ENCODE measurements at regions of chr4 and their contacts with region 1.

Region 1: DNA sequence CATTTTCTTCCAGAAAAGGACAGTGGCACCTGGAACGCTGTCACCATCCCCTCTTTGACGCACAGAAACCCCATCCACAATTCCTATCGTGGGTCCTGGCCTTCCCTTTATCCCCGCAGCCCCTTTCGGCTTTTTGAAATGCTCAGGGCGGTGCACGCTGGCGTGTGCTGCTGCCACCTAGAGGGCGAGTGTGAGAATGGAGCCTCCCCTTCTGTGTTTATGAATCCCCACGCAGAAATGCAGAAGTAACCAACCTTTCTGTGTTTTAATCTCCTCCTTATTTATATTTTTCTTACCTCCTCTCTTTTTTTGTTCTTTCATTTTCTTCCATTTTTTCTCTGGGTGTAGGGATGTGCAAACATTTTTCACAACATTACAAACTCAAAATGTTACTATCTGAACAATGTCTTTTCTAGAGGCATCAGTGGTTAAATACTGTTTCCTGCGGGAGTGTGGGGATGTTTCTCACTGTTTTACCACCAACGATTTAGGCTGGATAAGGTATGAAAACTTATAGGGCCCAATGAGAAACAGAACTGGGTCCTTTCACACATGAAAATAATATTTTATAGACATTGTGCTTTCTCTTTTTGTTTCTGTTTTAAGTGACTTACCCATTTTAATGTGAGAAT is 50.0 kb downstream of the TMA16 start:
- DNase-seq: peak; percentile 63
- H3K4me3 Mint-ChIP-seq: no peak overlapping the region
- H3K27ac Mint-ChIP-seq: no peak overlapping the region
- H3K4me1 Mint-ChIP-seq: peaks cover 5% of the 10 kb centered on the region
- H3K27me3 Mint-ChIP-seq: no peaks in the 10 kb centered on the region
- CTCF ChIP-seq: peak; percentile 80

Region 2: GRCh38 chr4:162497564-162498167 is 1046.9 kb before region 1 on chr4:
- CTCF ChIA-PET with region 1: interaction called, 54 read pairs
- POLR2A ChIA-PET with region 1: interaction called, 4 read pairs
- intact Hi-C with region 1: loop called (anchors 1 kb)
- DNase-seq: peak; percentile 66
- H3K4me3 Mint-ChIP-seq: no peak overlapping the region
- H3K27ac Mint-ChIP-seq: no peak overlapping the region
- H3K4me1 Mint-ChIP-seq: peaks cover 6% of the 10 kb centered on the region
- H3K27me3 Mint-ChIP-seq: no peaks in the 10 kb centered on the region
- CTCF ChIP-seq: peak; percentile 90

Region 3: GRCh38 chr4:163107754-163108153 is 436.8 kb before region 1 on chr4:
- CTCF ChIA-PET with region 1: interaction called, 10 read pairs
- POLR2A ChIA-PET with region 1: no interaction called
- intact Hi-C with region 1: loop called (anchors 10 kb)
- DNase-seq: peak; percentile 36
- H3K4me3 Mint-ChIP-seq: no peak overlapping the region
- H3K27ac Mint-ChIP-seq: no peak overlapping the region
- H3K4me1 Mint-ChIP-seq: no peaks in the 10 kb centered on the region
- H3K27me3 Mint-ChIP-seq: no peaks in the 10 kb centered on the region
- CTCF ChIP-seq: peak; percentile 18

Region 4: DNA sequence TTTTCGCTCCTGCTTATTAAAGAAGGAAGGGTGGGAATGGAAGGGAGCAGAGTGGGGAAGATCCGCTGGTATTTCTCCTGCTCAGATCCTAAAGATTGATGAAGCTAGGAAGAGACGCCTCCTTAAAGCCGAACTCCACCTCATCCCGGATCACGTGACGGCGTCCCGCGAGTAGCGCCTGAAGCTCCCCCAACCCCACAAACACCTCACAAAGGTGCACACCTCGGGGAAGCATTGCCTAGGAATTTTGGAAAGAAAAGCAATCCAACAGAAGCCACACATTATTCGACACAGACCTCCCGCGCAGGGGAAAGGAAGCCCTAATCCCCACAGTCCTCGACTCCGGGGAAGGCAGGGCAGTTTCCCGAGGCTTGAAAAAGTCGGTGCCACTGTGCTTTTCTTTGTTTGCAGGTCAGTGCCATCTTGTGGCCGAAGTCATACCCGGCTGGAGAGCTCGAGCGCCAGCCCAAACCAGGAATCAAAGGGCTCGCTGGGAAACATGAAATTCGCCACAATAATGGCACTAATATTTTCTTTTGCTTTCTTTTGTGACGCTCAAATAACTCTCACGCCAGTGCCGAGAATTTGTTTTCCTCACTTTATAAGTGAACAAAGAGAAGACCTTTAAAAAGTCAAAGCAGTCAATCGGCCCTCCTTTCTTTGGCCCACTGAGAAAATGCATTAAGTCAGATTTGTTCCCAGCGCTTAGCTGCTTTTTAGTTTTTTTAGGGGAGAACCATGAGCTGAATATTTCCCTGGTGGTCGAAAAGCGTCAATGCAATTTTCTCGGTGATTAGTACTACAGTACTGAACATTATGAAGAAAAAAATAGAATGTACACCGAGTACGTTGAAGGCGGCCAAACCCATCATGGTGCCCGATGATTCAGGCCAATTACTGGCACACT is 211.8 kb before region 1 on chr4 and contains the start of gene NPY1R:
- CTCF ChIA-PET with region 1: interaction called, 13 read pairs
- POLR2A ChIA-PET with region 1: interaction called, 3 read pairs
- intact Hi-C with region 1: loop called (anchors 2 kb)
- DNase-seq: peak; percentile 86
- H3K4me3 Mint-ChIP-seq: peak within 1 kb of the TSS; percentile 97
- H3K27ac Mint-ChIP-seq: peak within 1 kb of the TSS; percentile 73
- H3K4me1 Mint-ChIP-seq: peaks cover 5% of the 10 kb centered on the region
- H3K27me3 Mint-ChIP-seq: no peaks in the 10 kb centered on the region
- CTCF ChIP-seq: peak; percentile 68
- total RNA-seq, gene NPY1R: 0.63 and 2.8 TPM in 2 replicates

Region 5: DNA sequence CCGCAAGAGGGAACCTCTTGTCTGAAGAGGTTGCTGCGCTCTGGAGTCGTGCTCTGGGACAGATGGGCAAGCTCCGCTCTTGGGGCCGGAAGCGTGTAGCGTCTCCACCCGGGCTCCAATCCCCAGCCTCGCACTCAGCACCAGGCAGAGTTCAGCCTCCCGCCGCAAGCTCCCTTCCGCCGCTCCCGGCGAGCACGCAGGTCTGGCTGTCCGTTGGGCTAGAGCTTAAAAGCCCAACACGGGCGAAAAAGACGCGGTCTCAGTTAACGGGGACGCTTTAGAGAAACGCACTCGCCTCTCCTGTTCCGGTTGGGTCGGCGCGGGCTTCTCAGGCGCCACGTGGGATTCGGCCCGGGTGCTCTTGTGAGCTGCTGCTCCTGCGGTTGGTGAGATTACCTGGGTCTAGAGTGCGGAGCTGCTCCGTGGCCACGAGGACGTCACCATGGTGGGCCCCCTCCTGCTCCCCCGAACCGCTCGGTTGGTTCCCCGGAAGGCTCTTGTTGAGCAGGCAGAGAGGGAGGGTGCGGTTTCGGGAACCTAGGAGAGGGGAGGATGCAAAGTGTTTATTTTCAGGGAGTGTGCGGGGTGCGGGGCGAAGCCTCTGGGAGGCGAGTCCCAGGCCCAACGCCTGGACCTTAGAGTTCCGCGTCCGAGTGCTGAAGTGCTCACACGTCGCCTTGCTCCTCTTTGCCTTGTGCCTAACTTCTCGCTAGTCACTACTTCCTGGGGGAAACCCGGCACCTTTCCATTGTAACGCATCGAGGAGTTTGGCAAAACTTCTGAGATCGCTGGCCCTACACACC is 50.0 kb before region 1 on chr4 and contains the start of gene TMA16:
- CTCF ChIA-PET with region 1: interaction called, 5 read pairs
- POLR2A ChIA-PET with region 1: interaction called, 3 read pairs
- intact Hi-C with region 1: loop called (anchors 5 kb)
- DNase-seq: peak; percentile 96
- H3K4me3 Mint-ChIP-seq: peak within 1 kb of the TSS; percentile 94
- H3K27ac Mint-ChIP-seq: peak within 1 kb of the TSS; percentile 98
- H3K4me1 Mint-ChIP-seq: peaks cover 14% of the 10 kb centered on the region
- H3K27me3 Mint-ChIP-seq: no peaks in the 10 kb centered on the region
- CTCF ChIP-seq: no peak
- total RNA-seq, gene TMA16: 41.4 and 53.9 TPM in 2 replicates

Region 6: GRCh38 chr4:163587867-163588266 is 43.3 kb after region 1 on chr4:
- CTCF ChIA-PET with region 1: no interaction called
- POLR2A ChIA-PET with region 1: no interaction called
- intact Hi-C with region 1: no loop called
- DNase-seq: no peak
- H3K4me3 Mint-ChIP-seq: no peak overlapping the region
- H3K27ac Mint-ChIP-seq: no peak overlapping the region
- H3K4me1 Mint-ChIP-seq: peaks cover 6% of the 10 kb centered on the region
- H3K27me3 Mint-ChIP-seq: no peaks in the 10 kb centered on the region
- CTCF ChIP-seq: no peak

Region 7: GRCh38 chr4:164169591-164169990 is 625.1 kb after region 1 on chr4:
- CTCF ChIA-PET with region 1: no interaction called
- POLR2A ChIA-PET with region 1: no interaction called
- intact Hi-C with region 1: no loop called
- DNase-seq: peak; percentile 20
- H3K4me3 Mint-ChIP-seq: no peak overlapping the region
- H3K27ac Mint-ChIP-seq: no peak overlapping the region
- H3K4me1 Mint-ChIP-seq: peaks cover 5% of the 10 kb centered on the region
- H3K27me3 Mint-ChIP-seq: no peaks in the 10 kb centered on the region
- CTCF ChIP-seq: no peak

Region 8: GRCh38 chr4:164748375-164748774 is 1203.9 kb after region 1 on chr4:
- CTCF ChIA-PET with region 1: interaction called, 14 read pairs
- POLR2A ChIA-PET with region 1: no interaction called
- intact Hi-C with region 1: no loop called
- DNase-seq: peak; percentile 39
- H3K4me3 Mint-ChIP-seq: no peak overlapping the region
- H3K27ac Mint-ChIP-seq: no peak overlapping the region
- H3K4me1 Mint-ChIP-seq: peaks cover 6% of the 10 kb centered on the region
- H3K27me3 Mint-ChIP-seq: no peaks in the 10 kb centered on the region
- CTCF ChIP-seq: peak; percentile 41

Measured in MCF 10A (cell line).